CD14-positive monocyte (primary cell): ENCODE measurements at regions of chr4 and their contacts with region 1.

Region 1: DNA sequence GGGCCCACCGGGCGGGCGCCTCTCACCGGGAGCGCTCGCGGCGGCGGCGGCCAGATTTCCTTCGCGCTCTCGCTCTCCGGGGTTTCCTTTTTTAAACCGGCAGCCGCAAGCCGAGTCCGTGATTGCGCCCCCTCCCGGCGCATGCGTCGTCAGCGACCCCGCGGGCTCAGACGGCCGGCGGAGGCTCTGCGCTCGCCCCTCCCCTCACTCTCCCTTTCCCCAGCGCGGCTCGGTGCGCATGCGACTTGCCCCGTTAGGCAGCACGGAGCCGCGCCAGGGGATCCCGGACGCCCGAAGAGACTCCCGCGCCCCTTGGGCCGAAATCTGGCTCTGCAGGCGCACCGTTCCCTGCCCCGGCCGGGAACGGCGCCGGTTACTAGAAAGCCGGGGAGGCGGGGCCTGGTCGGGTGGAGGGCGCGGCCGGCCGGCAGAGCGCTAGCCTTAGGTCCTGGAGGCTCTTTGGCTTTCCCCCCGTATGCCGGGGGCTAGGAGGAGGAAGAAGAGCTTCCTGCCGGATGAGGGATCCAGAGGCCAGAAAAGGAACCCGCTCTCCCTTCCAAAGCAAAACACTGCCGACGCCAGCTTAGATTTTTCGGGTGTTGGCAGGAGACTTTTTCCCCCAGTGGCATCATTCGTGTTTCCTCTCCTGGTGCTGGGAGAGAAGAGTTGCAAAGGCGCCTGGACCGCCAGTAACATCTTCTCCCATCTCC is at the start of gene CLOCK:
- DNase-seq: peak; percentile 67 to 77 (median 74)
- H3K4me3 ChIP-seq: peak within 1 kb of the TSS; percentile 48 to 96 (median 86)
- H3K4me3 Mint-ChIP-seq: peak within 1 kb of the TSS; percentile 87 to 91
- H3K27ac ChIP-seq: peak within 1 kb of the TSS; percentile 70 to 83
- H3K27ac Mint-ChIP-seq: peak within 1 kb of the TSS; percentile 82 to 94 (median 90)
- H3K4me1 ChIP-seq: peaks cover 14 to 18% of the 10 kb centered on the region in 2 donors
- H3K4me1 Mint-ChIP-seq: peaks cover 17% of the 10 kb centered on the region
- H3K27me3 ChIP-seq: peaks cover 3 to 9% of the 10 kb centered on the region in 2 donors
- H3K27me3 Mint-ChIP-seq: peaks cover 8 to 25% (median 20%) of the 10 kb centered on the region in 3 donors
- CTCF ChIP-seq: peak; percentile 53
- polyA plus RNA-seq, gene CLOCK: 1.9 to 3.7 (median 2.9) TPM

Region 2: GRCh38 chr4:55345980-55346850 is 200.7 kb before region 1 on chr4 and contains the start of gene SRD5A3:
- intact Hi-C with region 1: loop called in 1 of 2 experiments (anchors 2 kb)
- DNase-seq: peak; percentile 67 to 77 (median 75)
- H3K4me3 ChIP-seq: peak within 1 kb of the TSS; percentile 60 to 83 (median 72)
- H3K4me3 Mint-ChIP-seq: peak within 1 kb of the TSS; percentile 88 to 95
- H3K27ac ChIP-seq: peak within 1 kb of the TSS; percentile 88 to 93
- H3K27ac Mint-ChIP-seq: peak within 1 kb of the TSS; percentile 91 to 96 (median 96)
- H3K4me1 ChIP-seq: peaks cover 12 to 32% of the 10 kb centered on the region in 2 donors
- H3K4me1 Mint-ChIP-seq: peaks cover 21% of the 10 kb centered on the region
- H3K27me3 ChIP-seq: no peaks in the 10 kb centered on the region
- H3K27me3 Mint-ChIP-seq: peaks cover 0 to 1% (median 0%) of the 10 kb centered on the region in 3 donors
- CTCF ChIP-seq: peak; percentile 99
- polyA plus RNA-seq, gene SRD5A3: 5.9 to 26.2 (median 16.2) TPM

Region 3: GRCh38 chr4:55574252-55574651 is 27.3 kb after region 1 on chr4:
- intact Hi-C with region 1: no loop called
- DNase-seq: peak in 1 of 3 donors; percentile 15
- H3K4me3 ChIP-seq: no peak overlapping the region
- H3K4me3 Mint-ChIP-seq: no peak overlapping the region
- H3K27ac ChIP-seq: no peak overlapping the region
- H3K27ac Mint-ChIP-seq: no peak overlapping the region
- H3K4me1 ChIP-seq: peaks cover 18 to 29% of the 10 kb centered on the region in 2 donors
- H3K4me1 Mint-ChIP-seq: peaks cover 10% of the 10 kb centered on the region
- H3K27me3 ChIP-seq: no peaks in the 10 kb centered on the region
- H3K27me3 Mint-ChIP-seq: peaks cover 0 to 1% (median 0%) of the 10 kb centered on the region in 3 donors
- CTCF ChIP-seq: no peak